ENCODE measurements at regions of chr7 and their contacts with region 1.

Region 1: GRCh38 chr7:18352339-18353255 is 143.0 kb upstream of the HDAC9 start:
- DNase-seq: peak; percentile 78
- H3K4me3 ChIP-seq: no peak overlapping the region
- H3K27ac ChIP-seq: no peak overlapping the region
- H3K4me1 ChIP-seq: peaks cover 2% of the 10 kb centered on the region
- H3K27me3 ChIP-seq: no peaks in the 10 kb centered on the region
- CTCF ChIP-seq: peak; percentile 40 to 55
- POLR2A ChIP-seq: no peak

Region 2: DNA sequence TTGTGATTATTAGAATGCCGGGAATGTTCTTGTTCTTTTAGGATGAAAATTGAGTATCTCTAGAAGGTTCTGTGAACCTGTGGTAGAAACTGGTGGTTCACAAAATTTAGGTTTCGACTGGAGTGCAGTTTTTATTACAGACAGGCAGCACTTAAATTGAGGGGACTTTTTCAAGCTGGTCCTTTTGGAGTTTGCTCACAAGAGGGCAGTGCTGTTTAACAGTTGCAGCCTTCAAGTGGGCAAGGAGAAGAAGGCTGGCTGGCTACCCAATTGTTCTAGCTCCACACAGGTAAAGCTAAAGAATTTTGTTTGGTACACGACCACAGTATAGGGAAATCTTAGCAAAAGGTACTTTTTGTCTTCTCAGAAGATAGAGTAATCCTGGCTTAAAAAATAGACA is 645.9 kb before region 1 on chr7:
- CTCF ChIA-PET with region 1: interaction called, 27 read pairs
- POLR2A ChIA-PET with region 1: no interaction called
- dilution Hi-C with region 1: no loop called
- intact Hi-C with region 1: no loop called
- DNase-seq: peak; percentile 74
- H3K4me3 ChIP-seq: no peak overlapping the region
- H3K27ac ChIP-seq: no peak overlapping the region
- H3K4me1 ChIP-seq: no peaks in the 10 kb centered on the region
- H3K27me3 ChIP-seq: peaks cover 3 to 6% of the 10 kb centered on the region in 2 experiments
- CTCF ChIP-seq: peak; percentile 48 to 64
- POLR2A ChIP-seq: no peak

Region 3: DNA sequence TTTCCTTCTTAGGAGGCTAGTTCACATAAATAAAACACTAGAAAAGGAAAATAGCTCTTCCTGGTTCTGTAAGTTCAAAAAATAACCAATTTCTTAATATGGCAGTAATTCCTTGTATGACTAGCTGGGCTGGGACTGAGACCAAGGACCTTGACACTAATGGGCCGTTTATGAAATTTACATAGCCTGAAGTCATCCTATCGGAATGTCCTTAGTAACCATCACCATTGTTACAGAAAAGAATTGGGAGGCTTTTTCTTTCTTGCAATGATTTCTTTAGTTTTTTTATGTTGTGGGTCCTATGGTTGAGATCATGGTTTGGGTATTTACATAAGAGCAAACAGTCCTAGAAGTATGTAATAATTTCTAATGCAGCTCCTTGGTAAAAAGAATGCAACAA is 55.9 kb after region 1 on chr7:
- CTCF ChIA-PET with region 1: interaction called, 5 read pairs
- POLR2A ChIA-PET with region 1: no interaction called
- dilution Hi-C with region 1: no loop called
- intact Hi-C with region 1: loop called (anchors 5 kb)
- DNase-seq: peak; percentile 75
- H3K4me3 ChIP-seq: no peak overlapping the region
- H3K27ac ChIP-seq: peak overlapping the region; percentile 28
- H3K4me1 ChIP-seq: peaks cover 23% of the 10 kb centered on the region
- H3K27me3 ChIP-seq: no peaks in the 10 kb centered on the region
- CTCF ChIP-seq: no peak
- POLR2A ChIP-seq: no peak

Region 4: DNA sequence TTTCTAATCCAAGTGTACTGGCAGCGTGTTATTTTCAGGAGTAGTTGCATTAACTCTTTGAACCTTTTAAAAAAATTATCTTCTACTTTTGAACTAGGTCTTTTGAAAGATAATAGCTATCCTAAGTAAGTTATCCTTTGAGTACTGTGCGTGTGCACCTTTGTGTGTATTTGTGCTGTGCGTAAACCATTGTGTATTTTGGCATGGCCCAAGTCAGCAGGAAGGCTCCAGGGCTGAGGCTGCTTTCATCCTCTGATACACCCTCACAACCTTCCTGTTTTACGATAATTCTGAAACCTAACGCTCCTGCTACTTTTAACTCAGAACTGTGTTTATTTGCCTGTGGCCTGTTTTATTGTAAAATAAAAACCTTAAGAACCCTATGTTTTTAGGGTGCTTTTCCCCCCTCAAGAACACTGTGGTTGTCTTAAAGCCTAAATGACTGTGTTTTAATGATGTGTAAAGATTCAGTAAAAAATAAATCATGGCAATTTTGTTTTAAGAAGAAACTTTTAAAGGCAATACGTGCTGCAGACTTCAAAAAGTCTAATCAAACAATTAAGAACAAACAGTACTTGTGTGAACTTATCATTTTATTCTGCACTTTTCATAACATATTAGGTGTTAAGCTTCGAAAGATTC is 200.5 kb after region 1 on chr7:
- CTCF ChIA-PET with region 1: interaction called, 12 read pairs
- POLR2A ChIA-PET with region 1: no interaction called
- dilution Hi-C with region 1: loop called (anchors 25 kb)
- intact Hi-C with region 1: no loop called
- DNase-seq: peak; percentile 73
- H3K4me3 ChIP-seq: no peak overlapping the region
- H3K27ac ChIP-seq: no peak overlapping the region
- H3K4me1 ChIP-seq: peaks cover 14% of the 10 kb centered on the region
- H3K27me3 ChIP-seq: no peaks in the 10 kb centered on the region
- CTCF ChIP-seq: no peak
- POLR2A ChIP-seq: no peak

Region 5: GRCh38 chr7:18590744-18591340 is 238.2 kb after region 1 on chr7:
- CTCF ChIA-PET with region 1: interaction called, 49 read pairs
- POLR2A ChIA-PET with region 1: no interaction called
- dilution Hi-C with region 1: no loop called
- intact Hi-C with region 1: loop called (anchors 1 kb)
- DNase-seq: peak; percentile 59
- H3K4me3 ChIP-seq: no peak overlapping the region
- H3K27ac ChIP-seq: no peak overlapping the region
- H3K4me1 ChIP-seq: no peaks in the 10 kb centered on the region
- H3K27me3 ChIP-seq: no peaks in the 10 kb centered on the region
- CTCF ChIP-seq: peak; percentile 30 to 38
- POLR2A ChIP-seq: no peak

Region 6: DNA sequence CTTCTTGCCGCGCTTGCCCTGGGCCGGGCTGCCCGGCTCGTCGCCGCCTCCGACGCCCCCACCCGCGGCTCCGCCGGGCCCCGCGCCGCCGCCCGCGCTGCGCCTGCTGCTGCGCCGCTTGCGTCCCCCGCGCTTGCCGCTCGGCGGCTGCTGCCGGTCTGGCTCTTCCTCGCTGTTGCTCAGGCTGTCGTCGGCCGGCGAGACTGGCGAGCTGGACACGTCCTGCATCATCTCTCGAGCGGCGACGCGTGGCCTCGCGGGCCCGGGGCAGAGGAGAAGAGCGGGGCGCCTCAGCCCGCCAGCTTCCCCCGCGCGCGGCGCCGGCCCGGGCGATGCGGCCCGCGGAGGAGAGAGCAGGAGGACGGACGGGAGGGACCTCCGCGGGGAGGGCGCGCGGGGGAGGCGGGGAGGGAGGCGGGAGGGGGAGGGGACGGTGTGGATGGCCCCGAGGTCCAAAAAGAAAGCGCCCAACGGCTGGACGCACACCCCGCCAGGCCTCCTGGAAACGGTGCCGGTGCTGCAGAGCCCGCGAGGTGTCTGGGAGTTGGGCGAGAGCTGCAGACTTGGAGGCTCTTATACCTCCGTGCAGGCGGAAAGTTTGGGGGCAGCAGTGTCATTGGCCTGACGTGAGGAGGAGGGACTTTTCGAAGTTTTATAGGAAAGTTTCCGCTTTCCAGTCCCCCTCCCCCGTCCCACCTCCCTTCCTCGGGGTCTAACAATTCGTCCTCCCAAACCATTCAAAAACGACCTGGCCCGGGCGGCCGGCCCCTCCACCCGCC is 764.7 kb after region 1 on chr7 and contains the start of gene TWIST1:
- CTCF ChIA-PET with region 1: interaction called, 26 read pairs
- POLR2A ChIA-PET with region 1: no interaction called
- dilution Hi-C with region 1: no loop called
- intact Hi-C with region 1: loop called (anchors 5 kb)
- DNase-seq: no peak
- H3K4me3 ChIP-seq: peak within 1 kb of the TSS in 2 of 3 experiments; percentile 22 to 37
- H3K27ac ChIP-seq: no peak within 1 kb of the TSS
- H3K4me1 ChIP-seq: peaks cover 13% of the 10 kb centered on the region
- H3K27me3 ChIP-seq: peaks cover 70 to 94% of the 10 kb centered on the region in 2 experiments
- CTCF ChIP-seq: no peak
- POLR2A ChIP-seq: no peak
- total RNA-seq, gene TWIST1: not detected in 2 replicates

Measured in endothelial cell of umbilical vein (primary cell).